ENCODE measurements at regions of chr1 and their contacts with region 1.

Region 1: DNA sequence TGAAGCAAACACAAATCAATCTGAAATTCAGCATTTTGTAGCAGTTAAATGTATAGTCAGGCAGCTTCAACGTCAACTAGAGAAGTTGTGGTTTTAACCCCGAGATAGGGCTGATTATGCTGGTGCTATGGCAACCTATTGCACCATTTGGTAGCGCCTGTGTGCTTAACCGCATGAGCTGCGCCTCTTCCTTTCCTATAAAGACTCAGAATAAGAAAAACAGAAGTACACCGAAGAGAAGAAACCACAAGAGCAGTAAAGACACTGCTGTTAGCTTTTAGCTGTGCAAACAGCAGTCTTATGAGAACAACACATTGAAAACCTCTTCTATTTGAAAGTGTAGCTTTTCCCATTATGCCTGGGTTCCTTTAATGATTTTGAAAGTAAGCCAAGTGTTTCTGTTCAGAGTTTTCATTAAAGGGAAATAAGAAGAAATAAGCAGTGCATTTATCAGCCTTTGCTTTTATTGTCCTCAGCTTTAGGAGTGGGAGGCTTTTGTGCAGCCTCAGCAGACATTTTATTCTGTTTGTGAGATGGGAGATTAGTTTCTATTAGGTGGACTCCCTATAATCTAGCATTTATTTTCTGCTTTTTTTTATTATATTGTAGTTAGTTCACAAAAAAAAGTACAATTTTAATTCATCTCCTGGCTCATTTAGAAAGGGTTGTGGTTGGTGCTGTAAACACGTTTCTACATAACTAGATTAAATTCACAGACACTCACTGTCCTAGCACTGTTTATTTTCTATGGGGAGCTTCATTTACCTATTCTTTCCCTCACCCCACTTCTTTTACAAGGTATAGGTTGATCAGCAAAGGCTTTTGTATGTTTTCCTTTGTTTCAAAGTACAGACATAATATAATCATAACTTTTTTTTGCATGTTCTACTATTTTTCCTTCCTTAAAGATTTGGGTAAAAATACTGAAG is 43.3 kb downstream of the PTPRC start:
- DNase-seq: peak; percentile 57 to 98 (median 79)
- ATAC-seq: peak; percentile 64
- H3K4me3 ChIP-seq: peak overlapping the region; percentile 9 to 18
- H3K4me3 Mint-ChIP-seq: peak overlapping the region; percentile 68
- H3K27ac ChIP-seq: peak overlapping the region; percentile 66 to 97
- H3K27ac Mint-ChIP-seq: peak overlapping the region; percentile 93
- H3K4me1 ChIP-seq: peaks cover 92% of the 10 kb centered on the region
- H3K4me1 Mint-ChIP-seq: peaks cover 84% of the 10 kb centered on the region
- H3K27me3 ChIP-seq: no peaks in the 10 kb centered on the region
- H3K27me3 Mint-ChIP-seq: no peaks in the 10 kb centered on the region
- CTCF ChIP-seq: no peak

Region 2: DNA sequence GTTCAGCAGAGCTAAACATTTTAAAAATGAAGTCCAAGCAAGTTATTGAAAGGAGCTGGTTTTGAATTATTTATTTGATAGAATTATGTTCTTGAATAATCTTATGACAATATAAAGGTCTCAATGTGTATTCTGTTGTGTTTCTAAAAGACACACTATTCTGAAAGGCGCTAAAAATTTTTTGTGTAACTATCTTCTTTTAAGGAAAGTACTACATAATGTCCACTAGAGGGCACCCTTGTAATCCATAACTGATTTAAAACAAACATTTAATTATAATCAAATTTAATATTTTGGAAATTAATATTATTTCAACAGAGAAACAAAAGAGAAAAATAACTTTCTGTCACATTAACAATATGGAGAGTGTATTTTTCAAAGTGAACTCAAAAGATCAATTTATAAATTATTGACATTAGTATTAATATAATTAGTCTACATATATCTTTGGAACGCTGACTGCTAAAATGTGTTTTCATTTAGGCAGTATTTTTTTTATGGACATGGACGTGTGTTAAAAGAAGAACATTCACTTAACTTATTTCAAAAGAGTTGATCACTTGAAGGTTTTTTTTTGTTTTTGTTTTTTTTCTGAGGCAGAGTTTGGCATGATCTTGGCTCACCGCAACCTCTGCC is 1155.2 kb before region 1 on chr1:
- CTCF ChIA-PET with region 1: no interaction called
- POLR2A ChIA-PET with region 1: no interaction called
- intact Hi-C with region 1: loop called in 1 of 2 experiments (anchors 5 kb)
- DNase-seq: peak in 2 of 9 experiments; percentile 41 to 60
- ATAC-seq: no peak
- H3K4me3 ChIP-seq: no peak overlapping the region
- H3K4me3 Mint-ChIP-seq: no peak overlapping the region
- H3K27ac ChIP-seq: no peak overlapping the region
- H3K27ac Mint-ChIP-seq: no peak overlapping the region
- H3K4me1 ChIP-seq: no peaks in the 10 kb centered on the region
- H3K4me1 Mint-ChIP-seq: no peaks in the 10 kb centered on the region
- H3K27me3 ChIP-seq: no peaks in the 10 kb centered on the region
- H3K27me3 Mint-ChIP-seq: no peaks in the 10 kb centered on the region
- CTCF ChIP-seq: peak; percentile 97

Region 3: DNA sequence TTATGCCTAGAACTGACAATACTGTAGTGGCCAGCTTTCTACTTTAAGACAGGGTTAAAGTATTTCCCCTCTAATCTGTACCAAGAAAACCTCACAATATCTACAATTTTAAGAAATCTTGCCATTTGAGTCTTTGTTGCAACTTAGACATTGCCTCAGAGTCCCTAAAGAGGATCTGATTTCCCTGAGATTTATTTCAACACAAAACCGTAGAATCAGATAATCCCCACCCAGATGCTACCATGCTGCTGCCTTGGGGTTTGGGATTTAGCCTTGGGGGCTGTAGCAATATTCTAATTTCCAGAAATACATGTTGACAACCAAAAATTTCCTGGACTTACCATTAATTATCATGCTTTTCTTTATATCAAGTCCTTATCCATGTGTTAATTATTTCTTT is 856.6 kb before region 1 on chr1:
- CTCF ChIA-PET with region 1: no interaction called
- POLR2A ChIA-PET with region 1: no interaction called
- intact Hi-C with region 1: no loop called
- DNase-seq: no peak
- ATAC-seq: no peak
- H3K4me3 ChIP-seq: no peak overlapping the region
- H3K4me3 Mint-ChIP-seq: no peak overlapping the region
- H3K27ac ChIP-seq: no peak overlapping the region
- H3K27ac Mint-ChIP-seq: no peak overlapping the region
- H3K4me1 ChIP-seq: no peaks in the 10 kb centered on the region
- H3K4me1 Mint-ChIP-seq: no peaks in the 10 kb centered on the region
- H3K27me3 ChIP-seq: no peaks in the 10 kb centered on the region
- H3K27me3 Mint-ChIP-seq: no peaks in the 10 kb centered on the region
- CTCF ChIP-seq: no peak

Region 4: DNA sequence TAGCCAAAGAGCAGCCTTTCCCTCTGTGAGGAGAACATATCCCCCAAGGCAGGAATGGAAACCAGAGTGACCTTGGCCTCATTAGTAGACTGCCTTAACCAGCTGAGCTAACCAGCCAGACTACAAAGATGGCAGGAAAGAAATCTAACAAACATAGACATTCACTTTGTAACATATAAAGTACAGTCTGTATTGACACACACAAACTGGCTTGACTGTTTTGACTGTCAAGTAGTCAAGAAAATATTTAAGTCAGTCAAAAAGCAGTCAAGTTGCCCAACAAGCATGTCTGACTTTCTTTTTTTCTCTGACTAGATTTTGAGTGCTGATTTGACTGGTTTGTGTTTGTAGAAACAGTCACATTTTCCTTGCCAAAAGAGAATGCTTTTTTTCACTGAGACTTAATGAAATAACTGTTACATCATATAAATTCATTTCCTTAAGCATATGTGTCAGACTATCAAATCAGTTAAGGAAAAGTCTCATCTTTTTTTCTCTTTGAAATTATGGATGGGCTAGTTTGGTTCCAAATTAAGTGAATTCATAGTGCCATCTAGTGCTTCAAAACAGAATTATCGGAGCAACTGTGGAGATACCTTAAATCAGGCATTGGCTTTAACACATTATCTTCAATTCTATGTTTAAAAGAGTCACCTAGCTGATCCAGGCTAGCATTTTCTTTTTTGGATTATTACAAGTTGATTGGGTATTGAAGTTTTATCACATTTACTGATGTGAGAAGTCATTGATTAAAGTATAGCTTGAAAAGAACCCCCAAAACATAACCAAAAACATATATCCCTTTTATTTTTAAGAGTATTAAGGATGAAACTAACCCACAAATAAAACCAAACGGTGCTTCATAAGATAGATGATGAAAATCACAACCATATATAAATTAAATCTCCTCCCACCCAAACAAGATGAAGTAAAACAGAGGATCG is 216.6 kb before region 1 on chr1:
- CTCF ChIA-PET with region 1: interaction called, 8 read pairs
- POLR2A ChIA-PET with region 1: no interaction called
- intact Hi-C with region 1: loop called (anchors 2 to 5 kb)
- DNase-seq: peak in 2 of 9 experiments; percentile 52 to 64
- ATAC-seq: peak; percentile 58
- H3K4me3 ChIP-seq: no peak overlapping the region
- H3K4me3 Mint-ChIP-seq: no peak overlapping the region
- H3K27ac ChIP-seq: no peak overlapping the region
- H3K27ac Mint-ChIP-seq: no peak overlapping the region
- H3K4me1 ChIP-seq: no peaks in the 10 kb centered on the region
- H3K4me1 Mint-ChIP-seq: peaks cover 3% of the 10 kb centered on the region
- H3K27me3 ChIP-seq: no peaks in the 10 kb centered on the region
- H3K27me3 Mint-ChIP-seq: no peaks in the 10 kb centered on the region
- CTCF ChIP-seq: peak; percentile 75

Region 5: DNA sequence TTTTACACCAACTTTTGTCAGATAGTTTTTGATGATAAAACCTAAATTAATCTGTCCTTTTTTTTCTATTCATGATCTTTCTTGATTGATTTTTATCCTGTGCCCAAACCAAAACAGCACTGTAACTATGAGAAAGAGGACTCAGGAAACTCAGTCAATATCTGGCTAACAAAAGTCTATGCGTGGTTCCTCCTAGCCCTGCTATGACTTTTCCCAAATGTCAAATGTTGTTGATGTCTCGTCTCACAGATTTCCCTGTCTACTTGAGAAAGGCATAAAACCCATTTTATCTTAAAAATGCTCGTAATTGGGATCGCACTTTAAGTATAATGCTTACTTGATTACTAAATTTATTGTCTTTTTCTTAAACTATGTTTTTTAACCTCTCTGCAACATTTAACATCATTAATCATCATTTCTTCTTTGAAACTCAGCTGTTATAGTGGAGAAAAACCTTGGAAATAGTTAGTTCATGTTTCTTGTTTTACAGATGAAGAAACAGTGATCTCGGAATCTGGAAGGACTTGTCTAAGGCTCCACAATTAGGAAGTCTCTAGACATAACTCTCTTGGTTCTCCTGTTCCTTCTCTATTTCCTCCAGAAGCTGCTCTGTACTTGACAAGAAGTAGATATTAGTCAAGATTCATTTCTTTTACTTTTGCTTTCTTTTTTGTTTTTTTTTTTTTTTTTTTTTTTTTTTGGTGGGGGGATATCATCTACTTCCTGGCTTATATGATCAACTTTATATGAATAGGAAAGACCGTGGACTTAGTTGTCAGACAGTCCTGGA is 69.4 kb before region 1 on chr1:
- CTCF ChIA-PET with region 1: interaction called, 8 read pairs
- POLR2A ChIA-PET with region 1: interaction called, 11 read pairs
- intact Hi-C with region 1: no loop called
- DNase-seq: peak in 2 of 9 experiments; percentile 44 to 67
- ATAC-seq: peak; percentile 50
- H3K4me3 ChIP-seq: peak overlapping the region; percentile 13 to 42
- H3K4me3 Mint-ChIP-seq: peak overlapping the region; percentile 83
- H3K27ac ChIP-seq: peak overlapping the region; percentile 54 to 85
- H3K27ac Mint-ChIP-seq: peak overlapping the region; percentile 98
- H3K4me1 ChIP-seq: peaks cover 65% of the 10 kb centered on the region
- H3K4me1 Mint-ChIP-seq: peaks cover 76% of the 10 kb centered on the region
- H3K27me3 ChIP-seq: no peaks in the 10 kb centered on the region
- H3K27me3 Mint-ChIP-seq: no peaks in the 10 kb centered on the region
- CTCF ChIP-seq: no peak

Region 6: GRCh38 chr1:198638894-198639635 is 43.0 kb before region 1 on chr1 and contains the start of gene PTPRC:
- CTCF ChIA-PET with region 1: interaction called, 5 read pairs
- POLR2A ChIA-PET with region 1: interaction called, 52 read pairs
- intact Hi-C with region 1: loop called (anchors 1 to 5 kb)
- DNase-seq: peak in 2 of 9 experiments; percentile 67 to 85
- ATAC-seq: peak; percentile 79
- H3K4me3 ChIP-seq: peak within 1 kb of the TSS; percentile 76 to 83
- H3K4me3 Mint-ChIP-seq: peak within 1 kb of the TSS; percentile 85
- H3K27ac ChIP-seq: peak within 1 kb of the TSS; percentile 80 to 82
- H3K27ac Mint-ChIP-seq: peak within 1 kb of the TSS; percentile 92
- H3K4me1 ChIP-seq: peaks cover 45% of the 10 kb centered on the region
- H3K4me1 Mint-ChIP-seq: peaks cover 56% of the 10 kb centered on the region
- H3K27me3 ChIP-seq: no peaks in the 10 kb centered on the region
- H3K27me3 Mint-ChIP-seq: no peaks in the 10 kb centered on the region
- CTCF ChIP-seq: no peak
- total RNA-seq, gene PTPRC: 603 to 634 TPM

Region 7: GRCh38 chr1:198657550-198658064 is 24.5 kb before region 1 on chr1:
- CTCF ChIA-PET with region 1: interaction called, 5 read pairs
- POLR2A ChIA-PET with region 1: interaction called, 21 read pairs
- intact Hi-C with region 1: loop called (anchors 1 to 2 kb)
- DNase-seq: peak in 3 of 9 experiments; percentile 47 to 87 (median 73)
- ATAC-seq: peak; percentile 23
- H3K4me3 ChIP-seq: peak overlapping the region; percentile 18 to 26
- H3K4me3 Mint-ChIP-seq: peak overlapping the region; percentile 74
- H3K27ac ChIP-seq: peak overlapping the region; percentile 64 to 97
- H3K27ac Mint-ChIP-seq: peak overlapping the region; percentile 98
- H3K4me1 ChIP-seq: peaks cover 84% of the 10 kb centered on the region
- H3K4me1 Mint-ChIP-seq: peaks cover 71% of the 10 kb centered on the region
- H3K27me3 ChIP-seq: no peaks in the 10 kb centered on the region
- H3K27me3 Mint-ChIP-seq: no peaks in the 10 kb centered on the region
- CTCF ChIP-seq: no peak

Region 8: GRCh38 chr1:198699167-198700015 is 17.3 kb after region 1 on chr1:
- CTCF ChIA-PET with region 1: interaction called, 5 read pairs
- POLR2A ChIA-PET with region 1: interaction called, 11 read pairs
- intact Hi-C with region 1: loop called in 1 of 2 experiments (anchors 2 kb)
- DNase-seq: peak; percentile 45 to 82 (median 73)
- ATAC-seq: peak; percentile 86
- H3K4me3 ChIP-seq: no peak overlapping the region
- H3K4me3 Mint-ChIP-seq: peak overlapping the region; percentile 8
- H3K27ac ChIP-seq: no peak overlapping the region
- H3K27ac Mint-ChIP-seq: peak overlapping the region; percentile 72
- H3K4me1 ChIP-seq: peaks cover 71% of the 10 kb centered on the region
- H3K4me1 Mint-ChIP-seq: peaks cover 83% of the 10 kb centered on the region
- H3K27me3 ChIP-seq: no peaks in the 10 kb centered on the region
- H3K27me3 Mint-ChIP-seq: no peaks in the 10 kb centered on the region
- CTCF ChIP-seq: peak; percentile 52

Region 9: DNA sequence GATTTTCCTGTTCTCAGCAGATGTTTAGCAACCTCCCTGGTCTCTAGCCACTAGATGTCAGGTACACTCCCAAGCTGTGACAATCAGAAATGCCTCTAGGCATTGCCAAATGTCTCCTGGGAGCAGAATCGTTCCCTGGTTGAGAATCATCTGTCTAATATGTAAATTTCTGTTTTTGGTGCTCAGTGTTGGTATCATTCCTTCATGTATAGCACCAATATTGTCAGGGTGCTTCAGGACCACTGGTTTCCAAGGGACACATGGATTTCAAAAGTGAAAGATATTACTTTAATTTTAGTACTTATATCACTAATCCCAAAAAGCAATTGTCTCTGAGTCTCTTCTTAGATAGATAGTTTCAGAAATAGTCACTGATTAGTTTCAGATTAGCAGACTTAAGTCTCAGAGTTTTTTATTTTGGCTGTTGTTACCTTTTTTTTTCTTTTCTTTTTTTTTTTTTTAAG is 116.9 kb after region 1 on chr1:
- CTCF ChIA-PET with region 1: no interaction called
- POLR2A ChIA-PET with region 1: no interaction called
- intact Hi-C with region 1: no loop called
- DNase-seq: no peak
- ATAC-seq: no peak
- H3K4me3 ChIP-seq: no peak overlapping the region
- H3K4me3 Mint-ChIP-seq: no peak overlapping the region
- H3K27ac ChIP-seq: no peak overlapping the region
- H3K27ac Mint-ChIP-seq: no peak overlapping the region
- H3K4me1 ChIP-seq: no peaks in the 10 kb centered on the region
- H3K4me1 Mint-ChIP-seq: no peaks in the 10 kb centered on the region
- H3K27me3 ChIP-seq: no peaks in the 10 kb centered on the region
- H3K27me3 Mint-ChIP-seq: no peaks in the 10 kb centered on the region
- CTCF ChIP-seq: no peak

Region 10: DNA sequence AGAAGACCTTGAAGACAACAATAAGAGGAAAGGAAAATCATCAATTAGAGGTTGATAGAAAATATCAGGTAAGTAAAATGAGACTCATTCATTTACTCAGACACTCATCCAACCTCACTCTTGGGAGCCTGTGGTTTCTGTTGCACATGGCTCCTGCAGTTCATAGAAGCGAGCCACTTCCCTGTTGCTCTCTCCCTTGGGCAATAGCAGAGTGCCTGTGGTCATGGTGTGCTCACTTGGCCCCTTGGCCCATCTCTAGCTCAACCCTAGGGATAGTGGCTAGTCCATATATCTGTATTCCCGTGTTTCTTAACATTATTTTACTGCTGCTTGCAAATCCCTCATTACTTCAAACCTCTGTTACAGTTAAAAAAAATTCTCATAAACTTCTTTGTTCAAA is 325.3 kb after region 1 on chr1:
- CTCF ChIA-PET with region 1: no interaction called
- POLR2A ChIA-PET with region 1: no interaction called
- intact Hi-C with region 1: no loop called
- DNase-seq: no peak
- ATAC-seq: no peak
- H3K4me3 ChIP-seq: no peak overlapping the region
- H3K4me3 Mint-ChIP-seq: no peak overlapping the region
- H3K27ac ChIP-seq: no peak overlapping the region
- H3K27ac Mint-ChIP-seq: no peak overlapping the region
- H3K4me1 ChIP-seq: peaks cover 20% of the 10 kb centered on the region
- H3K4me1 Mint-ChIP-seq: peaks cover 22% of the 10 kb centered on the region
- H3K27me3 ChIP-seq: no peaks in the 10 kb centered on the region
- H3K27me3 Mint-ChIP-seq: no peaks in the 10 kb centered on the region
- CTCF ChIP-seq: no peak

Measured in CD8-positive, alpha-beta T cell (primary cell).